T-cell (primary cell): ENCODE measurements at regions of chr7 and their contacts with region 1.

Region 1: DNA sequence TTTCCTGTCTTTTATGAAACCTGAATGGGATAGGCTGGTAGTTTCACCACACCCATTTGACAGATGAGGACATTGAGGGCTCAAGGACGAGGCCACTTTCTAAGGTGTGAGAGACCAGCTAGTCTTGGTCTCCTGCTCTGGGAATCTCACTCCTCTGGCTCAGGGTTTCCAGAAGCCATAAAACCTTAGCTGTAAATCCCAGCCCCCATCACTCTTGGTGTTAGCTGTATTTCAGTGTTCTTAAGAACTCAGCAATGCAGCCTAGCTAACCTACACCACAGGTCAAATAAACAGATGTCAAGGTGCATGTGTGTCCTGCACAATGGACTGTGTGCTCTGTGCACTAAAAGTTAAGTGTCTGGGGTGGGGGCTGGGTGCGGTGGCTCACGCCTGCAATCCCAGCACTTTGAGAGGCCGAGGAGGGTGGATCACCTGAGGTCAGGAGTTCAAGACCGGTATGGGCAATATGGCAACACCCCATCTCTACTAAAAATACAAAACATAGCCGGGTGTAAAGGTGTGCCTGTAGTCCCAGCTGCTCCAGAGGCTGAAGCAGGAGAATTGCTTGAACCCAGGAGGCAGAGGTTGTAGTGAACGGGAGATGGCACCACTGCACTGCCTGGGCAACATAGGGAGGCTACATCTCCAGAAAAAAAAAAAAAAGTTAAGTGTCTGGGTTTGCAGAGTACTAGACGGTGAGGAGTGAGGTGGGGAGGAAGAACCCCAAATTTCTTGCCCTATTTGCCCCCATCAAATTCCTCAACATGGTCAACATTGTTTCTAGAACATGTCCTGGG is 547 bp upstream of the EPO start:
- DNase-seq: no peak
- ATAC-seq: no peak
- H3K4me3 ChIP-seq: no peak overlapping the region
- H3K4me3 Mint-ChIP-seq: no peak overlapping the region
- H3K27ac ChIP-seq: no peak overlapping the region
- H3K27ac Mint-ChIP-seq: no peak overlapping the region
- H3K4me1 ChIP-seq: peaks cover 0 to 4% of the 10 kb centered on the region in 2 experiments
- H3K4me1 Mint-ChIP-seq: peaks cover 0 to 2% (median 2%) of the 10 kb centered on the region in 3 donors
- H3K27me3 ChIP-seq: peaks cover 2 to 68% of the 10 kb centered on the region in 2 experiments
- H3K27me3 Mint-ChIP-seq: peaks cover 41 to 43% of the 10 kb centered on the region in 2 donors

Region 2: DNA sequence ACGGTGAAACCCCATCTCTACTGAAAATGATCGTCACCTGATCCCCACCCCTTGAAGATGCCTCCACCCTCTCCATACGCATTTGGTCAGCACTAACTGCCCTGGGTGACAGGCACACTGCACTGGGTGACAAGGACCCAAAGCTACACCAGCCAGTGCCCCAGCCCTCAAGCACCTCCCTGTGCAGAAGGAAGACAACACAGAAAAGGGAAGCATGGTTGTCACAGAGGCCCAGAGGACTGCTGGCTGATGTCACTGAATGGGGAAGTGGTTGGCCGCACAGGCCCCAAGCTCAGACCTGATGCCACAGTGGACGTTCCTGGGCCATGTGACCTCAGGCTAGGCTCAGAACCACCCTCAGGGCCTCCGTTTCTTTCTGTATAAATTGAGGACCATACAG is 350.6 kb before region 1 on chr7:
- CTCF ChIA-PET with region 1: no interaction called
- POLR2A ChIA-PET with region 1: interaction called in 1 of 2 experiments, 10 read pairs
- DNase-seq: peak in 24 of 35 experiments; percentile 12 to 71 (median 33)
- ATAC-seq: peak in 3 of 4 experiments; percentile 12 to 36 (median 25)
- H3K4me3 ChIP-seq: no peak overlapping the region
- H3K4me3 Mint-ChIP-seq: no peak overlapping the region
- H3K27ac ChIP-seq: peak overlapping the region; percentile 32
- H3K27ac Mint-ChIP-seq: peak overlapping the region; percentile 39 to 75
- H3K4me1 ChIP-seq: peaks cover 0 to 45% of the 10 kb centered on the region in 2 experiments
- H3K4me1 Mint-ChIP-seq: peaks cover 31 to 45% (median 33%) of the 10 kb centered on the region in 3 donors
- H3K27me3 ChIP-seq: no peaks in the 10 kb centered on the region
- H3K27me3 Mint-ChIP-seq: no peaks in the 10 kb centered on the region

Region 3: DNA sequence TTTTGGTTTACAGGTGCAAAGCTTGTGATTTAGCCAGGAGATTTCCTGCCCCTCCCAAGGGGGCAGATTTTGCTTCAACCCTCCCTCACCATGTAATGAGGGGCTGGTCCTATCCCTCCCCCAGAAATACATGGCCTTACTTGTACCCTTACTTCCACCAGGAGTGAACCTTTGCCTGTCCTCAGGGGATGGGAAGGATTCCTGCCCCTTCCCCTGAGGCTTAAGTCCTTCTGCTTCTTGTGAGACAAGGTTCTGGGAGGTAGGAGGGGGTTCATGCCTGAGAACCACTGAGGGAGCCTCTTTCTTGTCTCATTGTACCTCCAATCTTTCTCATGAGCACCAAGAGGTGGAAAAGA is 210.0 kb after region 1 on chr7:
- CTCF ChIA-PET with region 1: no interaction called
- POLR2A ChIA-PET with region 1: no interaction called
- DNase-seq: no peak
- ATAC-seq: no peak
- H3K4me3 ChIP-seq: no peak overlapping the region
- H3K4me3 Mint-ChIP-seq: no peak overlapping the region
- H3K27ac ChIP-seq: no peak overlapping the region
- H3K27ac Mint-ChIP-seq: no peak overlapping the region
- H3K4me1 ChIP-seq: no peaks in the 10 kb centered on the region
- H3K4me1 Mint-ChIP-seq: no peaks in the 10 kb centered on the region
- H3K27me3 ChIP-seq: peaks cover 0 to 23% of the 10 kb centered on the region in 2 experiments
- H3K27me3 Mint-ChIP-seq: peaks cover 9 to 22% of the 10 kb centered on the region in 2 donors